Endothelial cell of umbilical vein (primary cell): ENCODE measurements at regions of chr12 and their contacts with region 1.

Region 1: DNA sequence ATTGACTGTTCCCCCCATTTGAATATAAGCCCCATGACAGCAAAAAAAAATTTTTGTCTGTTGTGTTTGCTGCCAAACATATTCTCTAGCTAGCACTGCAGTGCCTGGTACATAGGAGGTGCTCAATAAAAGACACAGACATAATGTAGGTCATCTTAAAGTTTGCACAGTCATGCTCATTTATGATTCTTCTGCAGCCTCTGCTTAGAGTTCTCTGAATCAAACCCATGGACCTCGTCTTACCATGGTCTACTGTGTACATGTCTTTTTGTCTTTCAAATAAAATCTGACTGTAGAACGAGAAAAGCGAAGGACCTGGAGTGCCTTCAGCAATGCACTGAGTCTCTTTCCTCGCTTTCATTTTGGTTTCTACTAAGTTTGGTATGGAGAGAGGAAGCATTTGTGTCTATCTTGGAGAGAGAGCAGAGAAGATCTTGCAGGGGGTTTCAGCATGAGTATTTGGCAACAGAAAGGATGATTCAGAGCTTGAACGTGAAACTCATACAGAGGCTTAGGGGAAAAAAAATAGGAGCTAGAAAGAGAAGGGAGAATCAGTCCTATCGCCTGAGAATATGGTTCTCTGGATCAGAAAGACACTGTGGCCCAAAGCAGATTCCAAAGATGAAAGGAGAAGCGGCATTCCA is 38.8 kb upstream of the TMCC3 start:
- DNase-seq: peak; percentile 74
- H3K4me3 ChIP-seq: no peak overlapping the region
- H3K27ac ChIP-seq: peak overlapping the region; percentile 54
- H3K4me1 ChIP-seq: peaks cover 20% of the 10 kb centered on the region
- H3K27me3 ChIP-seq: no peaks in the 10 kb centered on the region
- CTCF ChIP-seq: no peak
- POLR2A ChIP-seq: no peak

Region 2: DNA sequence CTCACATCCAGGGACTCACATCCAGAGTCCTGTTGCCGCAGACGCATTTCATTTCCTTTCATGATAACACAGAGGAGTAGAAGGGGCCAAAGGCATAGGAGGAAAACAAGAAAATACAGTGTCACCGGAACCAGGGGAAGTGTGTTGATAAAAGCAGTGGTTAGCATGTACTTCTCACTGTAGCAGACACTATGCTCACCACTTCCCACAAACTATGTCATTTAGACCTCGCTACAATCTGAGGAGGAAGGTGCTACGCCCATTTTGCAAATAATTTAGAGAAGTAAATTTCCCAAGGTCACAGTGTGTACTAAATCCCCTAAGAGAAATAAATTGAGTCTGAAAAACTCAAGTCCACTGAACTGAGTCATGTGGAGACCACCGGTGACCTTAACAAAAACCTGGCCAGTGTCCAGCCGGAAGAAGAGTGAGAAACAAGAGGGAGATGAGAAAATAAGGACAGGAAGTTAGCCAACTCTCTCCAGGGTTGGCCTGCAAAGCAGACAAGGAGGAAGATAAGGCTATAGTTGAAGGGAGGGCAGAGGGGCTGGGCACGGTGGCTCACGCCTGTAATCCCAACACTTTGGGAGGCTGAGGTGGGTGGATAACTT is 13.0 kb before region 1 on chr12:
- CTCF ChIA-PET with region 1: interaction called, 8 read pairs
- POLR2A ChIA-PET with region 1: interaction called, 3 read pairs
- dilution Hi-C with region 1: no loop called
- intact Hi-C with region 1: loop called (anchors 1 kb)
- DNase-seq: peak; percentile 84
- H3K4me3 ChIP-seq: no peak overlapping the region
- H3K27ac ChIP-seq: peak overlapping the region; percentile 66
- H3K4me1 ChIP-seq: peaks cover 40% of the 10 kb centered on the region
- H3K27me3 ChIP-seq: no peaks in the 10 kb centered on the region
- CTCF ChIP-seq: no peak
- POLR2A ChIP-seq: no peak

Region 3: GRCh38 chr12:94704452-94705306 is 15.6 kb after region 1 on chr12:
- CTCF ChIA-PET with region 1: interaction called, 14 read pairs
- POLR2A ChIA-PET with region 1: interaction called, 3 read pairs
- dilution Hi-C with region 1: no loop called
- intact Hi-C with region 1: no loop called
- DNase-seq: peak; percentile 96
- H3K4me3 ChIP-seq: no peak overlapping the region
- H3K27ac ChIP-seq: peak overlapping the region; percentile 48
- H3K4me1 ChIP-seq: peaks cover 25% of the 10 kb centered on the region
- H3K27me3 ChIP-seq: no peaks in the 10 kb centered on the region
- CTCF ChIP-seq: no peak
- POLR2A ChIP-seq: no peak